T-cell (primary cell): ENCODE measurements at regions of chr4 and their contacts with region 1.

Region 1: GRCh38 chr4:53309321-53310040 is 56.4 kb downstream of the SCFD2 start:
- DNase-seq: no peak
- ATAC-seq: no peak
- H3K4me3 ChIP-seq: no peak overlapping the region
- H3K4me3 Mint-ChIP-seq: no peak overlapping the region
- H3K27ac ChIP-seq: no peak overlapping the region
- H3K27ac Mint-ChIP-seq: peak overlapping the region in 1 of 2 donors; percentile 11
- H3K4me1 ChIP-seq: no peaks in the 10 kb centered on the region
- H3K4me1 Mint-ChIP-seq: peaks cover 4 to 9% (median 6%) of the 10 kb centered on the region in 3 donors
- H3K27me3 ChIP-seq: no peaks in the 10 kb centered on the region
- H3K27me3 Mint-ChIP-seq: no peaks in the 10 kb centered on the region

Region 2: GRCh38 chr4:53355930-53356521 is 46.5 kb after region 1 on chr4:
- CTCF ChIA-PET with region 1: no interaction called
- POLR2A ChIA-PET with region 1: no interaction called
- DNase-seq: no peak
- ATAC-seq: no peak
- H3K4me3 ChIP-seq: no peak overlapping the region
- H3K4me3 Mint-ChIP-seq: no peak overlapping the region
- H3K27ac ChIP-seq: no peak overlapping the region
- H3K27ac Mint-ChIP-seq: no peak overlapping the region
- H3K4me1 ChIP-seq: no peaks in the 10 kb centered on the region
- H3K4me1 Mint-ChIP-seq: peaks cover 27 to 28% (median 28%) of the 10 kb centered on the region in 3 donors
- H3K27me3 ChIP-seq: no peaks in the 10 kb centered on the region
- H3K27me3 Mint-ChIP-seq: no peaks in the 10 kb centered on the region

Region 3: DNA sequence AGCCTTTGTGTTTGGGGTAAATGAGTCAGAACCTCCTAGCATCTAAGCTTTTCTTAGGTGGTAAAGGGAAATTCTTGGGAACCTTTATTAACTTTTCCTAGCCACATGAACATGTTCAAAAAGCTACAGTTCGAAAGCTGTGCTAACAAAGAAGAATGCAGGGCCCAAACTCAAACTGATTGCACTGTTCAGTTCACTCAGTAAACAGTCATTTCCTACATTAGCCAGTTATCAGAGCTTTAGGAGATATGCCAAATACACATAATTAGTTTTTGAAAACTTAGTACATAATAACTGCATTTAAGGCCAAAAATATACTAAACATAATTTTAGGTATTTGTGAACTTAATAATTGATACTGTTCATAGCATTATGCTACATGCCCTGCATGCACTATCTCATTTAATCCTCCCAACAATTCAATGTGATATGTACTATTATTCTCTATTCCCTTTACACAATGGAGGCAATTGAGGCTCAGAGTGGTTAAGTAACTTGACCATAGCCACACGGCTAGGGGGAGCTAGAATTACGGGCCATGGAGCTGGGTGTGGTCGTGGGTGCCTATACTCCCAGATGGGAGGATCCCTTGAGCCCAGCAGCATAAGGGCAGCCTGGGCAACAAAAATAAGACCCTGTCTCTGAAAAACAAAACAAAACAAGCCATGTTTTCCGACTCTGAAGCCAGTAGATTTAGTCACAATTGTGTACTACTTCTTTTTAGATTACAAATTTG is 875.7 kb after region 1 on chr4:
- CTCF ChIA-PET with region 1: interaction called in 1 of 2 experiments, 10 read pairs
- POLR2A ChIA-PET with region 1: no interaction called
- DNase-seq: no peak
- ATAC-seq: no peak
- H3K4me3 ChIP-seq: no peak overlapping the region
- H3K4me3 Mint-ChIP-seq: no peak overlapping the region
- H3K27ac ChIP-seq: no peak overlapping the region
- H3K27ac Mint-ChIP-seq: no peak overlapping the region
- H3K4me1 ChIP-seq: no peaks in the 10 kb centered on the region
- H3K4me1 Mint-ChIP-seq: no peaks in the 10 kb centered on the region
- H3K27me3 ChIP-seq: peaks cover 0 to 3% of the 10 kb centered on the region in 2 experiments
- H3K27me3 Mint-ChIP-seq: peaks cover 0 to 3% of the 10 kb centered on the region in 2 donors